Dendritic cell treated with granulocyte-macrophage colony-stimulating factor and Interleukin-4, amounts not matched to agents 40 ng/mL and 50 ng/mL, for 4 days (primary cell): ENCODE measurements at regions of chr16 and their contacts with region 1.

Region 1: DNA sequence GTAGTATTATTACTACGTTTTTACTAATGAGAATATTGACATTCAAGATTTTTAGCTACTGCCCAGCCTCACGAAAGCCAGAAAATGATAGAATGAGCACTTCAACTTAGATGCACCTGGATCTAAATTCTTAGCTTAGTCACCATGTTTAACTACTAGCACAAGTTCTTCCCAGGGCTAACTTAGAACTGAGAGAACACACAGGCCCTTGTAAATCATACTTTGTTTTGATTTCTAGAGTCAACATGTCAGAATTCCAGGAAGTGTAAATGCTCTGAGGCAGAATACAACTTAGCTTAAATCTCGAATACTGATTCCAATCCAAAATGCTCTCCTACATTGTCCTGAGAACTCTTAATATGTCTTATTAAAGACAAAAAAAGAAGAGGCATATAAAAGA is 6.8 kb upstream of the ACSM1 start:
- H3K4me3 Mint-ChIP-seq: no peak overlapping the region
- H3K27ac Mint-ChIP-seq: no peak overlapping the region
- H3K4me1 Mint-ChIP-seq: no peaks in the 10 kb centered on the region
- H3K27me3 Mint-ChIP-seq: no peaks in the 10 kb centered on the region

Region 2: DNA sequence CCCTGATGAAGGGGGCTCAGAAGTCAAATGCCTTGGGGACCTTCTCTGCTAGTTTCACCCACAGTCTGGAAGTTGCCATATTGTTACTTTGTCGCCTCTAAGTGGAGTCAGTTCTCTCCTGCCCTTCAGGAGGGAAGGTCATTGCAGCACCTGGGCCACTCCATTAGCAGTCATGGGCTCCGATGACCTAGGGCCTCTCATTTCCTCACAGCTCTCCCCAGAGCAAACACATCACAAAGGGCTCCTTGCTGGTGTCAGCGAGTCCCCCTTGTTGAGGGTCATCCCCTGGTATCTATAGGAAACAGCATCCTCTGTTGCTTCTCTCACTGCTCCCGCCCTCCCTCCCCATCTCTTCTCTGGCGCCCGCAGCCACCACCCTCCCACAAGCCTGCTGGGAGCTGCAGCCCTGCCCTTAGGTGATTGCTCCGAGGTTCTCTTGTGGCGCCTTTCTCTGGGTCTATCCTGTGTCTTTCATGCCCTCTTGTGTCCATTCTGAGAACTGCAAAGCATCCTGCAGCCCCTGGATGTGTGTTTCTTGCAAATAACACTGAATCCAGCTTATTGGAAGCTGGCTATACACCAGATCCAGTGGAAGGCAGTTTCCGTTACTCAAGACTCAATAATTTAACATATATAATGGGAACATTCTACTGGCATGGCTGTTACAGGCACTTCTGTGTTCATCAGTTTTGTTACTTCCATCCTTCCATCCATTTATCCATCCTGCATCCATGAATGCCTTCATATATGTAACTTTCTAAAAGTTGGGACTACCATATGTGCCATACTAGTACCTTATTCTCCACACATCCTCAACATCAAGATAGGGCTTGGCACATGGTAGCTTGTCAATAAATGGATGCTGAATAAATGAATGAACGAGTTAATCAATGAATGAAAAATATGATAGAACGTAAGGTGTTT is 320.9 kb before region 1 on chr16:
- intact Hi-C with region 1: loop called (anchors 5 kb)
- H3K4me3 Mint-ChIP-seq: no peak overlapping the region
- H3K27ac Mint-ChIP-seq: no peak overlapping the region
- H3K4me1 Mint-ChIP-seq: peaks cover 2% of the 10 kb centered on the region
- H3K27me3 Mint-ChIP-seq: peaks cover 24% of the 10 kb centered on the region

Region 3: GRCh38 chr16:20598832-20599469 is 105.3 kb before region 1 on chr16:
- intact Hi-C with region 1: loop called (anchors 1 kb)
- H3K4me3 Mint-ChIP-seq: no peak overlapping the region
- H3K27ac Mint-ChIP-seq: no peak overlapping the region
- H3K4me1 Mint-ChIP-seq: no peaks in the 10 kb centered on the region
- H3K27me3 Mint-ChIP-seq: peaks cover 3% of the 10 kb centered on the region